CD8-positive, alpha-beta T cell (primary cell): ENCODE measurements at regions of chr10 and their contacts with region 1.

Region 1: DNA sequence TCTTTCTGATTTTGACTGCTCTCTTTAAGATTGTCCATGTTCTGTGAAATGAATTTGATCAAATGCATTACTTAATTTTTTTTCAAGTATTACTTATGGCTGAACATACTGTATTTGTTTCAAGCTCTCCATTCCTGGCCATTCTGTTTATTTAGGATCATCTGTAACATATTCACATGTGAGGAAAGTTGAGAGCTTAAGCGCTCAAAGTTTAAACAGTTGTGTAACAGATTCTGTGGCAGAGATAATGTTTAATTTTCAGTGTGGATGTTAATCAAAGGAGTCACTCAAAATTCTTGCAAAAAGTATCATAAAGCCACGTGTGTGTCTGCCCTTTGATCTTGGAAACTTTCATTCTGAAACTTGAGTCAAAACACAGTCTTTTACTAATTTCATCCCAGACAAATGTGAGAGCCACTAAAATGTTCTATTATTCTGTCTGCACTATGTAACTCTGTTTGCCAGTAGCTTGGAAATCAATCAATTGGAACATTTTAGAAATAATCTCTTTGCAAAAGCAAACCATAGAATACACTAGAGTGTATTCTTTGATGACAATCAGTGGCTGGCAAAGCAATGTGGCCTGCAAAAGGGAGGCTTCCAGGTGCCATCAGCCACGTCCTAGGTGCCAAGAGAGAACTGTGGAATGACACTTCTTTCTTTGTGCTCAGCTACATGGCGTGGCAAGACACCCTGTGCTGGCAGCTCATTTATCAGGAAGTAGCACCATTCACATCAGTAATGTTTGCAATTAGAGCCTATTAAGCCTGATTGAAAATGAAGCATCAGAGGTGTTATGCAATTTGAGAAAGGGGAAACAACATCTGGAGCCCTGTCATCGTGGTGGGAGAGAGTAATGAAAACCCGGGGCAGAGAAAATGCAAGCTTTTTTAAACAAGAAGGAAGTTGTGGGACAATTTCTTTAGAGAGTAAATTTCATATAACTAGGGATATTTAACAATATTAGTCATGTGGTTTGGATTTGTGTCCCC is 40.9 kb downstream of the ARL5B start:
- DNase-seq: no peak
- ATAC-seq: no peak
- H3K4me3 ChIP-seq: no peak overlapping the region
- H3K4me3 Mint-ChIP-seq: no peak overlapping the region
- H3K27ac ChIP-seq: no peak overlapping the region
- H3K27ac Mint-ChIP-seq: no peak overlapping the region
- H3K4me1 ChIP-seq: no peaks in the 10 kb centered on the region
- H3K4me1 Mint-ChIP-seq: no peaks in the 10 kb centered on the region
- H3K27me3 ChIP-seq: no peaks in the 10 kb centered on the region
- H3K27me3 Mint-ChIP-seq: peaks cover 2% of the 10 kb centered on the region
- CTCF ChIP-seq: peak; percentile 14

Region 2: GRCh38 chr10:18583575-18584270 is 116.4 kb before region 1 on chr10:
- CTCF ChIA-PET with region 1: no interaction called
- POLR2A ChIA-PET with region 1: no interaction called
- intact Hi-C with region 1: loop called in 1 of 2 experiments (anchors 10 kb)
- DNase-seq: peak in 1 of 9 experiments; percentile 13
- ATAC-seq: no peak
- H3K4me3 ChIP-seq: no peak overlapping the region
- H3K4me3 Mint-ChIP-seq: no peak overlapping the region
- H3K27ac ChIP-seq: no peak overlapping the region
- H3K27ac Mint-ChIP-seq: no peak overlapping the region
- H3K4me1 ChIP-seq: no peaks in the 10 kb centered on the region
- H3K4me1 Mint-ChIP-seq: peaks cover 14% of the 10 kb centered on the region
- H3K27me3 ChIP-seq: no peaks in the 10 kb centered on the region
- H3K27me3 Mint-ChIP-seq: no peaks in the 10 kb centered on the region
- CTCF ChIP-seq: peak; percentile 26

Region 3: GRCh38 chr10:19719284-19719683 is 1019.1 kb after region 1 on chr10:
- CTCF ChIA-PET with region 1: no interaction called
- POLR2A ChIA-PET with region 1: no interaction called
- intact Hi-C with region 1: no loop called
- DNase-seq: no peak
- ATAC-seq: no peak
- H3K4me3 ChIP-seq: no peak overlapping the region
- H3K4me3 Mint-ChIP-seq: no peak overlapping the region
- H3K27ac ChIP-seq: no peak overlapping the region
- H3K27ac Mint-ChIP-seq: no peak overlapping the region
- H3K4me1 ChIP-seq: no peaks in the 10 kb centered on the region
- H3K4me1 Mint-ChIP-seq: no peaks in the 10 kb centered on the region
- H3K27me3 ChIP-seq: no peaks in the 10 kb centered on the region
- H3K27me3 Mint-ChIP-seq: no peaks in the 10 kb centered on the region
- CTCF ChIP-seq: no peak